ENCODE measurements at regions of chr12 and their contacts with region 1.

Region 1: GRCh38 chr12:90978117-90978770 is 23.3 kb upstream of the CCER1 start:
- DNase-seq: no peak
- H3K4me3 ChIP-seq: no peak overlapping the region
- H3K27ac ChIP-seq: peak overlapping the region in 1 of 4 donors; percentile 10
- H3K4me1 ChIP-seq: no peaks in the 10 kb centered on the region
- H3K27me3 ChIP-seq: no peaks in the 10 kb centered on the region
- CTCF ChIP-seq: peak; percentile 53 to 67 (median 58)
- EP300 ChIP-seq: no peak
- POLR2A ChIP-seq: no peak

Region 2: DNA sequence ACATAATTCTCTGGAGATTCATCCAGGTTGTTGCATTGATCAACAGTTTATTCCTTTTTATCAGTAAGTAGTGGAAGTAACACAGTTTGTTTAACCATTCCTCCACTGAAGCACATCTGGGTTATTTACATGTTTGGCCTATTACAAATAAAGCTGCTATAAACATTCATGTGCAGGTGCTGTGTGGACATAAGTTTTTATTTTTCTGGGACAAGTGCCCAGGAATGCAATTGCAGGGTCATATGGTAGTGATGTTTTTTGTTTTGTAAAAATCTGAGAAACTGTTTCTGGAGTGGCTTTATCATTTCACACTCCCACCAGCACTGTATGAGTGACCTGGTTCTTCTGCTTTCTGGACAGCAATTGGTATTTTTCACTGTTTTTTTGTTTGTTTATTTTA is 528.6 kb before region 1 on chr12:
- intact Hi-C with region 1: no loop called
- DNase-seq: no peak
- H3K4me3 ChIP-seq: no peak overlapping the region
- H3K27ac ChIP-seq: no peak overlapping the region
- H3K4me1 ChIP-seq: no peaks in the 10 kb centered on the region
- H3K27me3 ChIP-seq: no peaks in the 10 kb centered on the region
- CTCF ChIP-seq: no peak
- EP300 ChIP-seq: no peak
- POLR2A ChIP-seq: no peak

Region 3: GRCh38 chr12:91109148-91109564 is 130.9 kb after region 1 on chr12:
- intact Hi-C with region 1: loop called (anchors 5 kb)
- DNase-seq: no peak
- H3K4me3 ChIP-seq: peak overlapping the region in 3 of 4 donors; percentile 36 to 46 (median 39)
- H3K27ac ChIP-seq: peak overlapping the region in 1 of 4 donors; percentile 32
- H3K4me1 ChIP-seq: peaks cover 0 to 9% (median 6%) of the 10 kb centered on the region in 4 donors
- H3K27me3 ChIP-seq: no peaks in the 10 kb centered on the region
- CTCF ChIP-seq: peak in 2 of 3 experiments; percentile 39 to 53
- EP300 ChIP-seq: no peak
- POLR2A ChIP-seq: no peak

Region 4: DNA sequence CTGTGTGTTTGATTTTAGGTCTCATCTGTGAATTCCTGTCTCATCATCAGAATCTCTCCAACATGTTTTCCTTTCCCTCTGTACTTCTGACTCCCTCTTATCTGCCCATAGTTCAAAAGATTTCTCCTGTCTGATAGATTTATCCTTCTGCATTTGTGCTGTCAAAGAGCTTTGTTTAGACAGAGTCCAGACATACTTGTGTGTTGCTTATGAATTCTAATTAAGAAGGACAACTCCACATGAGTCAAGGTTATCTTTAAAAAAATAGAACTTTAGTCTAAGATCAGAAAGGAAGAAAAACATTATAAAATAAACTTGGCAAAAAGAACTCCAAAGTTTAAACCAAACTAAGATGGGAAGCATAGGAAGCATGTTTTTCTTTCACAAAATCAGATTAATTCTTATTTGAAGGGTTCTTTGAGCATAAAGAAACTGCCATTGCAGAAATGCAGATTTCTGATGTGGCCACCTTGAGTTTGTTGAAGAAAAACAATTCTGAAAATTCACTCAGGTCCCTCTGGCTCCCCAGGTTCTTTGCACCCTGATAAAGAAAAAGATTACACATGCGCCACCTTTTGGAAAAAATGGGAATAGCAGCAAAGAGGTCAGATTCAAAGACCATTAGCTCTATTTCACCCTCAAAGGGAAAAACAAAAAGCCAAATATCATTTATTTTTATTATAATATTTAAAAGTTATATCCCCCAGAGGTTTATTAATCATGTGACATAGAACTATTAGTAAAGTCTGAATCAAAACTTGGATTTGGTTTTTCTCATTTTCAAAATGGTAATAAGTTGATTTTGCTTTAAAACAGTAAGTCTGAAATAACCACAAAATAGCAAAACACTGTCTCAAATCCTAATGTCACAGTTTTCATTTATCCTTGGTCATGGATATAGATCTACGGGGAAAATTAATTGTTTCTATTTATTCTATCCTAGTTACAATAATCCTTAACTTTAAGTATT is 348.1 kb after region 1 on chr12:
- intact Hi-C with region 1: loop called (anchors 10 kb)
- DNase-seq: no peak
- H3K4me3 ChIP-seq: peak overlapping the region in 1 of 4 donors; percentile 3
- H3K27ac ChIP-seq: peak overlapping the region in 3 of 4 donors; percentile 21 to 39 (median 22)
- H3K4me1 ChIP-seq: peaks cover 0 to 9% (median 2%) of the 10 kb centered on the region in 4 donors
- H3K27me3 ChIP-seq: no peaks in the 10 kb centered on the region
- CTCF ChIP-seq: peak; percentile 70 to 81 (median 78)
- EP300 ChIP-seq: no peak
- POLR2A ChIP-seq: no peak

Region 5: GRCh38 chr12:91355150-91356006 is 377.1 kb after region 1 on chr12:
- intact Hi-C with region 1: loop called (anchors 5 kb)
- DNase-seq: no peak
- H3K4me3 ChIP-seq: no peak overlapping the region
- H3K27ac ChIP-seq: no peak overlapping the region
- H3K4me1 ChIP-seq: no peaks in the 10 kb centered on the region
- H3K27me3 ChIP-seq: no peaks in the 10 kb centered on the region
- CTCF ChIP-seq: peak; percentile 80 to 84 (median 81)
- EP300 ChIP-seq: no peak
- POLR2A ChIP-seq: no peak

Measured in esophagus muscularis mucosa (tissue), 4 donors.